Aorta (tissue), 5 donors: ENCODE measurements at regions of chr9 and their contacts with region 1.

Region 1: DNA sequence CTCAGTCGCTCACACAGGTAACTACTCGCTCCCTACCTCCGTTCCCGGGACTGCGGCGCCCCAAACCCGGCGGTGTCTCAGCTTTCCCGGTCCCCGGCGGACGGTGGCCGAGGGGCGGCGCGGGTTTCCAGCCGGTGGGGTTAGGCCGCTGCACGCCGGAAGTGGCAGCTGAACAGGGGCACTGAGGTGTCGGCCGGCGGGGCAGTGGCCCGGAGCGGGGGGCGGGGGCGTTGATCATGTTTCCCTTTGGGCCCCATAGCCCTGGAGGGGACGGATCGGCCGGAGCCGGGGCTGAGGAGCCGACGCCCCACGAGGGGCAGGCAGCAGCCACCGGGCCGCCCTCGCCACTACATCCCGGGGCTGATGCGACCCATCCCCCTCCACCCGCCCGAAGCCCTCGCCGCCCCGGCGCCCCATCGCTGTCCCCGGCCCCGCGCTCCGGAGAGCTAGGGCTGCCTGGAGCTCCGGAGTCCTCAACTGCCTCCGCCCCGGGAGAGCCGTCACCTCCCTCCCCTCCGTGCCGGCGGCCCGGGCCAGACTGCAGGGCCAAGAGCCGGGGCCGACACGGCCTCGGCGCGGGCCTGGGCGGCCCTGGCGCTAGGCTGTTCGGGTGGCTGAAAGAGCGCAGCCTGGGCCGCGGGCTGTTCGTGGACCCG is at the start of gene DCAF10:
- DNase-seq: peak; percentile 89 to 96
- ATAC-seq: peak; percentile 99
- H3K4me3 ChIP-seq: peak within 1 kb of the TSS; percentile 59 to 79
- H3K27ac ChIP-seq: peak within 1 kb of the TSS; percentile 30 to 45
- H3K4me1 ChIP-seq: peaks cover 0 to 4% of the 10 kb centered on the region in 2 donors
- H3K27me3 ChIP-seq: no peaks in the 10 kb centered on the region
- total RNA-seq, gene DCAF10: 27.7 to 29.5 TPM

Region 2: GRCh38 chr9:37784616-37785483 is 15.9 kb before region 1 on chr9 and contains the start of gene EXOSC3:
- intact Hi-C with region 1: loop called (anchors 1 kb)
- DNase-seq: peak; percentile 95 to 96
- ATAC-seq: peak; percentile 95
- H3K4me3 ChIP-seq: peak within 1 kb of the TSS; percentile 81 to 86
- H3K27ac ChIP-seq: peak within 1 kb of the TSS; percentile 14 to 62
- H3K4me1 ChIP-seq: no peaks in the 10 kb centered on the region
- H3K27me3 ChIP-seq: no peaks in the 10 kb centered on the region
- total RNA-seq, gene EXOSC3: 28.3 to 30.2 TPM